ENCODE measurements at regions of chr20 and their contacts with region 1.

Region 1: DNA sequence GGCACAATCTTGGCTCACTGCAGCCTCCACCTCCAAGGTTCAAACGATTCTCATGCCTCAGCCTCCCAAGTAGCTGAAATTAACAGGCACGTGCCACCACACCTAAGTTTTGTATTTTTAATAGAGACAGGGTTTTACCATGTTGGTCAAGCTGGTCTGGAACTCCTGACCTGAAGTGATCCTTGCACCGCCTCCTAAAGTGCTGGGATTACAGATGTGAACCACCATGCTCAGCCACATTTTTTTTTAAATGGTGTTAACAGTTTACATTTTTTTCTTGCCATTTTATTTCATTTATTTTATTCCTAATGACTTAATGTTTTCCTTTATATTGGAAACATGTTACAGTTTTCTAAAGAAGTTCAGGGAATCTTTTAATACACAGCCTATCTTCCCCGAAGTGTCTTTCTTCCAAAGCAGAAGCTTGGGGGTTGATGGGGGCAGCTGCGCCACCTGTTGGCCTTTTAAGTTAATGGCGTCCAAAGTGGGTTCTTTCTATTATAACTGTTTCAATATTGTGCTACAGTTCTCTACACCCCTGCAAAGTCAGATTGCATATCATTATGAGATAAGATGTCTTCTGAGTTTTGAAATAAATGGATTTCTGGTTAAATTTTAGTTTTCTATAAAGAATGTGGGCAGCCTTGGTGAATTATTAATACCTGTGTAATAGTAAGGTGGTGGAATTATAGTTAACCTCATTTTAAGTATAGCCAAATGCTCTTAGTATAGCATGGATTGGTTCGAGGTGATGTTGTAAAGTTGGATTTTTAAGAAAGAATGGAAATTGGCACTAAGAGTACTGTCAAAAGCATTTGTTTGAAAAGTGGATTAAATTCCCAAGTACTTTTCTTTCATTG is 42.0 kb upstream of the PLCG1 start:
- DNase-seq: peak; percentile 68
- ATAC-seq: peak; percentile 54
- H3K4me3 Mint-ChIP-seq: no peak overlapping the region
- H3K27ac Mint-ChIP-seq: no peak overlapping the region
- H3K4me1 Mint-ChIP-seq: peaks cover 10% of the 10 kb centered on the region
- H3K27me3 Mint-ChIP-seq: no peaks in the 10 kb centered on the region

Region 2: DNA sequence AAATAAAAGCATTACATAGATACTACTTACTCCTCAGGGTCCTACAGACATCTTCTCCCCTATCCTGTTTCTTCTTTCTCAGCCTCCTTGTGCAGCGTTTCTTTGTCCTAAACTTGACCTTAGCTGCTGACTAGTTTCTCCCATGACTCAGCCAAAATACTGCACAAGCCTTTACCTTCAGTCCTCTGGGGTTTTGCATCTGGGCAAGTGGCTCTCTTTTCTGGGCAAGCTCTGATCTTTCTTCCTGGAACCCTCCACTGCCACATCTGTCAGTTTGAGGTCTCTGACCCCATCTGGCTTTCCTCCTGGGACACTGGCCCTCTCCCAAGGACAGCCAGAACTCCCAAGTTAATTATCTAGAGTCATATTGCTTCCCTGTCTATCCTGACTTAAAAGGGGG is 1294.8 kb before region 1 on chr20:
- CTCF ChIA-PET with region 1: no interaction called
- POLR2A ChIA-PET with region 1: no interaction called
- intact Hi-C with region 1: no loop called
- DNase-seq: no peak
- ATAC-seq: no peak
- H3K4me3 Mint-ChIP-seq: no peak overlapping the region
- H3K27ac Mint-ChIP-seq: no peak overlapping the region
- H3K4me1 Mint-ChIP-seq: no peaks in the 10 kb centered on the region
- H3K27me3 Mint-ChIP-seq: no peaks in the 10 kb centered on the region

Region 3: DNA sequence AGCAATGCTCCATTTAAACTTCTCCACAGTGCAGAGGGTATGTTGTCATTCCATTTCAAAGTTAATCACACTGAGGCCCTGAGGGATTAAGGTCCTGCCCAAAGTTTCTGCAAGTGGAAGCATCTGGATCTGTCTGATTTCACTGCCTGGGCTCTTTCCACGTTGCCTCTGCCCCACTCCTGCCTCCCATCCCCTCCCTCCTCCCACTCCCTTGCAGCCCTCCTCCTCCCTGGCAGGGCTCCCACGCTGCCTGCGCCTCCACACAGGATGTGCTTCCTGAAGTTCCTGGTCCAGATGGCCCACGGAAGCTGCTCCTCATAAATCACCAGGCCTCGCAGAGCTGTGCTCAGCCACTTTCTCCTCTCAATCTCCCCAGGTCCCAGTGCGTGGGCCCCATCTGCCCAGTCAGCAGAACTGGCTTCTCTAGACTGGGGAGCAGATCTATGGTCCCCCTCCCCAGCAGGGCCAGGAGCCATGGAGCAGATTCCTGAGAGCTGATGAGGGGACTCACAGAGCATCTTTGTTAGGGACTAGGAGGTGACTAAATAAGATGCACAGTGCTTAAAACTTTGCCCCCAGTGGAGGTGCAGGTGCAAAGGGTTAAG is 340.9 kb before region 1 on chr20:
- CTCF ChIA-PET with region 1: no interaction called
- POLR2A ChIA-PET with region 1: no interaction called
- intact Hi-C with region 1: loop called in 1 of 2 experiments (anchors 10 kb)
- DNase-seq: no peak
- ATAC-seq: no peak
- H3K4me3 Mint-ChIP-seq: no peak overlapping the region
- H3K27ac Mint-ChIP-seq: no peak overlapping the region
- H3K4me1 Mint-ChIP-seq: peaks cover 20% of the 10 kb centered on the region
- H3K27me3 Mint-ChIP-seq: no peaks in the 10 kb centered on the region

Region 4: DNA sequence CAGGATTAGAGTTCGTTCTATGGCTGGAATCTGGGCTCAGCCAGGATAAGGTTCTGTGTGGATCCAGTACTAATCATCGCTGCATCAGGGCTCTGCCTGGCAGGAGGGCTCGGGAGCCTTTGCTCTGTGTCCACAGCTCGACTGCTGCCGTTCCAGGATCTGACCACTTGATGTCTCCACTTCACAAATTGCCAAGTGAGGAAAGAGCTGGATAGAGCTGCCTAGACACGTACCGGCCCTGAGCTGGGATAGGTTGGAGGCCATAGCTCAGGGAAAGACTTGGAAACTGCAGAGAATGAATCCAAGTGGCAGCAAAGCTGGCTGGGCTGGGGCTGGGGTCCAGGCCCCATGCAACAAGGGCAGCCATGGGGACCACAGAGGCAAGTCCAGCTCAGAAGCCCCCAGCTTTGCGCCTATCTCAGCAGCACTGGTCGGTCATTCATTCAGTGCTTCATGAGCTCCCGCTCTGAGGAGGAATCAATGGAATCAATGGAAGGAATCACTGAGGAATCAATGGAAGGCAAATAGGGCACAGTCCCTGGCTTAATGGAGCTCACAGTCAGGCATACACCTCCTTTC is 104.7 kb before region 1 on chr20:
- CTCF ChIA-PET with region 1: interaction called, 279 read pairs
- POLR2A ChIA-PET with region 1: interaction called, 11 read pairs
- intact Hi-C with region 1: loop called (anchors 1 kb)
- DNase-seq: peak; percentile 85
- ATAC-seq: peak; percentile 98
- H3K4me3 Mint-ChIP-seq: no peak overlapping the region
- H3K27ac Mint-ChIP-seq: peak overlapping the region; percentile 78
- H3K4me1 Mint-ChIP-seq: peaks cover 28% of the 10 kb centered on the region
- H3K27me3 Mint-ChIP-seq: no peaks in the 10 kb centered on the region

Region 5: DNA sequence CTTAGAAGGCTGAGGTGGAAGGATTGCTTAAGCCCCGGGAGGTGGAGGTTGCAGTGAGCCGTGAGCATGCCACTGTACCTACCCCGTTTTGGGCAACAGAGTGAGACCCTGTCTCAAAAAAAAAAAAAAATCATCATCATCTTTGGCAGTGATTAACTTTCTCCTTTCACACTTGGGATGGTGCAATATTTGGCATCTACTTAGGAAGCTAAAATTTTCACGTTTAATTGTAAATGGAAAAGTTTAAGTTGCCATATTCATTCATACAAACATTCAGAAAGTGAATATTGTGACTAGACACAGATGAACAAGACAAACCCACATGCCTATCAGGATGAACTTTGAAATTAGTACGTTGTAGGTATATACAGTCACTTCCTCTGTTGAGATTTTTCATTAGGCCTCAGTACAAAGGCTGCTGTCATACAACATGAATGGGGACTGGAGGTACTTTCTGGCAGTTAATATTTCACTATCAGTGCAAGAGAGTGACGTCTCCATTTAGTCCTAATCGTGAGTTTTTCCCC is 56.4 kb before region 1 on chr20:
- CTCF ChIA-PET with region 1: interaction called, 10 read pairs
- POLR2A ChIA-PET with region 1: no interaction called
- intact Hi-C with region 1: no loop called
- DNase-seq: no peak
- ATAC-seq: peak; percentile 96
- H3K4me3 Mint-ChIP-seq: no peak overlapping the region
- H3K27ac Mint-ChIP-seq: peak overlapping the region; percentile 79
- H3K4me1 Mint-ChIP-seq: peaks cover 86% of the 10 kb centered on the region
- H3K27me3 Mint-ChIP-seq: no peaks in the 10 kb centered on the region

Region 6: GRCh38 chr20:41078329-41078728 is 17.0 kb before region 1 on chr20:
- CTCF ChIA-PET with region 1: interaction called, 10 read pairs
- POLR2A ChIA-PET with region 1: no interaction called
- intact Hi-C with region 1: no loop called
- DNase-seq: no peak
- ATAC-seq: no peak
- H3K4me3 Mint-ChIP-seq: no peak overlapping the region
- H3K27ac Mint-ChIP-seq: peak overlapping the region; percentile 70
- H3K4me1 Mint-ChIP-seq: peaks cover 52% of the 10 kb centered on the region
- H3K27me3 Mint-ChIP-seq: no peaks in the 10 kb centered on the region

Region 7: DNA sequence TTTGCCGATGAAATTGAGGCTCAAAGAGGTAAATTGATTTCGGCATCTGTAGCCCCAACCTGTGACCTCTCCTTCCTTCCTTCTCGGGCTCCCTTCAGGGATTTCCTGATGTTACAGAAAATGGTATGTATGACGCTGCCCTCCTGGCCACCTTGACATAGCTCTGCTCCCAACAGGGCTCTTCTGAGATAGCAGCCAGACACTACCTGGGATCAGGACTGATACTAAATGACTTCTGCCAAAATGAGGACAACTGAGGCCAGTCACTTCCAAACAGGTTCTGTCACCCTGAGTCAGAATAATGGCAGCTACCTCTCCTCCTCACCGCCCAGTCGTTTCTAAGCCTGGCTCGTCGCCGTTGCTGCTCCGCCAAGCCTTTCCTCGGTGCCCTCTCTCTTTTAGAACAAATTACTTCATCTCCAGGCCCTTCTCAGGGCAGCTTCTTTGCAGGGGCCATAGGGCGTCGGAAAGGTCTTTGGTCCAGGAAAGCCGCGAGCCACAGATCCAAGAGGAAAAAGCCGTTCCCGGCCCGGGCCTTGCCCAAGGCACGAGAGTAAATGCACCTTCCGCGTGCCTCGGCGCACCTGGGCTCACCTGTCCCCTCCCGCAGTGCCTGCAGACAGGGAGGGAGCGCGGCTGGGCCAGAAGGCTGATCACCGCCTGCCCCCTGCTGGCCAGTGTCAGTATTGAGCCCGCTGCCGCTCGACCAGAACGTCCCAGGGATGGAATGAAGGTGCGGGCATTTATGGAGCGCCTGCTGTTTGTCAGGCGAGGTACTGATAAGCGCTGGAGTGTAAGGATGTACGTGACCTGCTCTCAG is 244.4 kb after region 1 on chr20:
- CTCF ChIA-PET with region 1: interaction called, 5 read pairs
- POLR2A ChIA-PET with region 1: no interaction called
- intact Hi-C with region 1: loop called in 1 of 2 experiments (anchors 1 kb)
- DNase-seq: peak; percentile 92
- ATAC-seq: peak; percentile 76
- H3K4me3 Mint-ChIP-seq: peak overlapping the region; percentile 68
- H3K27ac Mint-ChIP-seq: peak overlapping the region; percentile 27
- H3K4me1 Mint-ChIP-seq: peaks cover 7% of the 10 kb centered on the region
- H3K27me3 Mint-ChIP-seq: peaks cover 2% of the 10 kb centered on the region

Region 8: DNA sequence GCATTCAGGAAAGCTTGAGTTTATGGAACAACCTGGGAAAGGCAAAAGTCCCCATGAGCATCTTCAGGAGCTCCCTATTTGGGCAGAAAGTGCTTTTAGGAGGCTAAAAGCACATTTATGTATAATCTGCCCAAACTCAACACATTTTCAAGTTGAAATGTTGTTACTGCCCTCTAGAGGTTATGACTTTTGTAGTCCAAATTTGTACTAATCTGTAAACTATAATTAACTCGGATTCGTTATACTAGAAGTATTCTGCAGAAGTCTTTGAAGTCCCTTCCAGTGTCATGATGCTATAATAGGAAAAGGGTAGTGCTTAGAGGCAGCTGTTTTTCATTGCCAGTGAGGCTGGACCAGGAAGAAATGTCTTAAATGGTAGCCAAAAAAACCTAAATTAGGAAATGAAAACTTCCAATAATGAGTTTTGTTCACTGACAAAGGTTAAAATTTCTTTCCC is 316.1 kb after region 1 on chr20:
- CTCF ChIA-PET with region 1: no interaction called
- POLR2A ChIA-PET with region 1: no interaction called
- intact Hi-C with region 1: no loop called
- DNase-seq: no peak
- ATAC-seq: no peak
- H3K4me3 Mint-ChIP-seq: no peak overlapping the region
- H3K27ac Mint-ChIP-seq: no peak overlapping the region
- H3K4me1 Mint-ChIP-seq: peaks cover 30% of the 10 kb centered on the region
- H3K27me3 Mint-ChIP-seq: no peaks in the 10 kb centered on the region

Region 9: GRCh38 chr20:42652266-42652665 is 1556.9 kb after region 1 on chr20:
- CTCF ChIA-PET with region 1: no interaction called
- POLR2A ChIA-PET with region 1: no interaction called
- intact Hi-C with region 1: no loop called
- DNase-seq: no peak
- ATAC-seq: no peak
- H3K4me3 Mint-ChIP-seq: no peak overlapping the region
- H3K27ac Mint-ChIP-seq: no peak overlapping the region
- H3K4me1 Mint-ChIP-seq: no peaks in the 10 kb centered on the region
- H3K27me3 Mint-ChIP-seq: no peaks in the 10 kb centered on the region